ENCODE measurements at regions of chr9 and their contacts with region 1.

Region 1: DNA sequence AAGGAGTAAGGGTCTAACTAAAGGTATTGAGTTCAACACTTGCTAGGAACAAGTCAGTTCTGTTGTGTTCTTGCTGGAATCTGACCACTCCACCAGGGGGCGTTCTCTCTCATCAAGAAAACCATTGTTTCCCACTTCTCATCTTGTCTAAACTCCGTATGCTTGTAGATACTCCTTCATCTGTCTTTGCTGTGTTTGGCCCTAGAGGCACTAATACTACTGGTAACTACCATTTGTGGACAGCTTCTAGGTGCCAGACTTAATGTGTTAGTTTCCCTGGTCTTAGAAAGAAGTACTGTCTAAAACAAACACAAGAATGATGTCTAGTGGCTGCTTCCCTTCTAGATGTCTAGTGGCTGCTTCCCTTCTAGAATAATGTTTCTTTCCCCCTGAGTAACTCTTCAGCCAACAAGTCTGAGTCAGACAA is 18.7 kb upstream of the PTPDC1 start:
- DNase-seq: peak; percentile 68 to 69
- H3K4me3 ChIP-seq: no peak overlapping the region
- H3K27ac ChIP-seq: no peak overlapping the region
- H3K4me1 ChIP-seq: no peaks in the 10 kb centered on the region
- H3K27me3 ChIP-seq: no peaks in the 10 kb centered on the region
- CTCF ChIP-seq: peak; percentile 81 to 88 (median 84)
- POLR2A ChIP-seq: no peak

Region 2: DNA sequence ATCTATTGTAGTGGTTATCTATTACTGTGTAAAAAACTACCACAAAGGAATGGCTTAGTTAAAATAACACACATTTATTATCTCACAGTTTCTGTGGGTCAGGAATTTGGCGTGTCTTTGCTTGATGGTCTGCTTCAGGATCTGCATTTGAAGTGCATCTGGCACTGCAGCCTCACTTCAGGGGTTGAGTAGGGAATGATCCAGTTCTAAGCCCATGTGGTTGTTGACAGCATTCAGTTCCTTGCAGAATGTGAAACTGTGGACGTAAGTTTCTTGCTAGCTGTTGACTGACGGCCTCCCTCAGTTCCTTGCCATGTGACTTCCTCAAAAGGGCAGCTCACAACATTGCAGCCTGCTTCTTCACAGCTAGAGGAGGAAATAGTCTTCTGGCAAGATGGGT is 1659.1 kb before region 1 on chr9:
- intact Hi-C with region 1: no loop called
- DNase-seq: no peak
- H3K4me3 ChIP-seq: peak overlapping the region in 1 of 3 donors; percentile 36
- H3K27ac ChIP-seq: peak overlapping the region; percentile 16 to 74
- H3K4me1 ChIP-seq: no peaks in the 10 kb centered on the region
- H3K27me3 ChIP-seq: no peaks in the 10 kb centered on the region
- CTCF ChIP-seq: no peak
- POLR2A ChIP-seq: no peak

Region 3: DNA sequence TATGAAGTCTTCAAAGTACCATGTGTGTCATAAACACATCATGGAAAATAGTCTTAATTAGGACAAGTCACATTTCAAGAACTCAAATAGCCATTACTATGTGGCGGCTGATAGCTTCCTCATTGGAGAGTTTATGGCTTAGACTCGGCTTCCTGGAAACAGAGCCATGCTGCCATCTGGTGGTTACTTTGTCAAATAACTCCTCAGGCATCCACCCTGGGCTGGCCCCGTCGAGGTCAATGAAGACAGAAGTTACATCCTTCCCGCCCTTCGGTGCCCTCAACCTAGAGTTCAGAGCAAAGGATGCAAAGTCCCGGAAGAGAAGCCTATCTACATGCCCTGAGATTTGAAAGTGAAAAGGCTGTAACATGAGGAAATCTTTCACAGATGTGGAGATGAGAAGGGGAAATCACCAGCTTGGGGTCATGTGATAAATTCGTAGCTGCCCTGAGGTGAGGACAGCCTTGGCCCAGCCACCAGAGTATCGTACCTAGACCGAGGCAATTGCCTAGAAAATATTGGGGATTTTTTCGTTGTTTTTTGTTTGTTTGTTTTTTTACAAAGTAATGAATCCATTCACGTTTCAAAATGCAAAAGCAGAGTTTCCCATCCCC is 148.1 kb after region 1 on chr9:
- intact Hi-C with region 1: loop called (anchors 10 kb)
- DNase-seq: peak; percentile 50 to 73
- H3K4me3 ChIP-seq: no peak overlapping the region
- H3K27ac ChIP-seq: no peak overlapping the region
- H3K4me1 ChIP-seq: no peaks in the 10 kb centered on the region
- H3K27me3 ChIP-seq: no peaks in the 10 kb centered on the region
- CTCF ChIP-seq: peak; percentile 80 to 92 (median 91)
- POLR2A ChIP-seq: no peak

Measured in breast epithelium (tissue), 4 donors.